HEK293 (cell line): ENCODE measurements at regions of chr5 and their contacts with region 1.

Region 1: DNA sequence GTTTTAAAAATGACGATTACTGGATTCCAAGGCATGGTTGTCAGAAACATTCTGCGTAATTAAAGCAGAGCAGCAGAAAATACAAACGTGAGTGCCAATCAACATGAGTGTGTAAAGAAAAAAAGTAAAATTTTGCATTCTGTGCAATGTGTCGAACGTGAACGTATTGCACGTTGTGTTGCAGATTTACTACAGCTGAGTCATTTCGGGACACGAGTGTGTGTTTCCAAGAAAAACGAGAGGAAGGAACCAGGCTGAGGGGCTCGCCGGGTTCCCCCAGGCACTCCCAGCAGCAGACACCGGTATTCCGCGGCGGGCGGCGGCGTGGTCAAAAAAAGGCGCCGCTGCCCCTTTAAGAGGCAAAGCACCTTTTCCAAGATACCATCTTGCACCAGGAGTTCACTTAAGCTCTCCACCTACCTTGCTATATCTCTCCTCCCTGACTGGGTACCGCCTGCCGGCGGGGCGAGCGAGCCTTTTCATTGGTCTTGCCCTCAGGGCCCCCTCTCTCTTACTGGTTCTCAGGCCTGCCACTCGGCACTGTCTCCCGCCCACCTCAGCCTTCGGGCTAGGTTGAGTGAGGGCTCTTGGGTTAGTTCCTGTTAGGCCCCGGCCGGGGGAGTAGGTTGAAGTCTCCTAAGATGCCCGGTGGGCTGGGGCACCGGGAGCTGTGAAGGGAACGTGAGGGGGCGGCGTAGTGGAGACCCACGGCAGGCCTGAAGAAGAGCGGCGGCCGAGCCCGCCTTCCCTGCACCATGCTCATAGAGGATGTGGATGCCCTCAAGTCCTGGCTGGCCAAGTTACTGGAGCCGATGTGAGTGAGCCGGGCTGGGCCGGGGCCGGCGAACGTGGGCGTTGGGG is at the start of gene RBM27:
- H3K4me3 ChIP-seq: peak within 1 kb of the TSS; percentile 99
- H3K27ac ChIP-seq: peak within 1 kb of the TSS; percentile 87
- H3K4me1 ChIP-seq: peaks cover 11% of the 10 kb centered on the region
- CTCF ChIP-seq: no peak

Region 2: GRCh38 chr5:146188358-146188757 is 14.9 kb before region 1 on chr5:
- CTCF ChIA-PET with region 1: no interaction called
- POLR2A ChIA-PET with region 1: interaction called, 23 read pairs
- H3K4me3 ChIP-seq: no peak overlapping the region
- H3K27ac ChIP-seq: no peak overlapping the region
- H3K4me1 ChIP-seq: no peaks in the 10 kb centered on the region
- CTCF ChIP-seq: no peak